ENCODE measurements at regions of chr5 and their contacts with region 1.

Region 1: DNA sequence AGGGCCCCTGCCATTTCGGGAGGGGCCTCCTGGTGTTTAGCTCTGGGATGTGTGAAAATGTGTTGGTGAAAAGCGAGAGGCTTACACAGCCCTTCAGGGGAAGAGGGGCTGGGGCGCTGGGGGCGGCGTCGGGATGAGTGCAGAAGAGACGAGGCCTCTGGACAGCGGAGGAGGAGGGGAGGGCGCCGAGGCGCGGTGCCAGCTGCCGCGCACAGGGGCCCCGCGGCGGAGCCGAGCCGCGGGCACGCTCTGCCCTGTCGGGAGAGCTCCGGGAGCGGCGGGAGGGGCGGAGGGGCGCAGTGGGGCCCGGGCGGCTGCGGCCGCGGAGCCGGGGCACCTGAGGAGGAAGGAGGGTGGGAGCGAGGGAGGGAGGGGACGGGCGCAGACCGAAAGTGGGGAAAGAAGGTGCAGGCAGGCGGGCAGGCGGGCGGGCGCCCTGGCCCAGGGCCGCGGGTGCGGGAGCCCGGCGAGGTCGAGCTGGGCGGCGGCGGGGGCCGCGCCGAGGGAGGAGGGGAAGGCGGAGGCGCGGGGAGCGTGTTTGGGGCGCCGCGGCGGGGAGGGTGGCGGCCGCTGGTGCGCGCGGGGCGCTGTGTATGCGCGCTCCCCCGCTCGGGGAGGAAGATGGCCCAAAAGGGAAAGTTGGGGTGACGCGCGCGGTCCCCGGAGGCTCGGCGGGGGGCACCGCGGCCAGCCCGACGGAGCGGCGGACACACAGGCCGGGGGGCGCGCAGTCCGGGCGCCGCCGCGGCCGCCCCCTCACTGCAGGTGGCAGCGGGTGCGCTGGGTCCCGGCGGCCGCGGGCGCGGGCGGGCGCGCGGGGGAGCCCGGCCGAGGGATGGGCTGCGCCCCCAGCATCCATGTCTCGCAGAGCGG is at the start of gene PDE8B:
- DNase-seq: no peak
- H3K4me3 ChIP-seq: no peak within 1 kb of the TSS
- H3K27ac ChIP-seq: no peak within 1 kb of the TSS
- H3K4me1 ChIP-seq: no peaks in the 10 kb centered on the region
- CTCF ChIP-seq: no peak
- total RNA-seq, gene PDE8B: 0.22 TPM in 1 of 2 replicates, not detected in the other

Region 2: DNA sequence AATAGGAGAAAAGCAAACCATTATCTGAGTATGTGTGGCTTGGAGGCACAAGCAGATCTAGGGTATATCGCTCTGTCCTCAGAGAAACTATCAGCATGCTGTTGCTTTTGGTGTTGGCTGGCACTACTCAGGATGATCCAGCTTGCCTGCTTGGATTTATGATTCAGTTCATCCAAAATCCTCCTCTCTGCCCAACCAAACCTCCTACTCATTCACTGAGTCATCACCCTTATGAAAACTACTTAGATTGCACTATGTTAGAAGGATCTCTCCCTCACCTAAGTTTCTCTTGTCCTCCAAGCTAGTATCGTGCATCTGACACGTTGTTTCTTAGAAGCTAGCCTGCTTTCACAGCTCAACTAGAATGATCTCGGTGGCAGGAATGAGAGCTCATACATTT is 109.0 kb before region 1 on chr5:
- CTCF ChIA-PET with region 1: no interaction called
- POLR2A ChIA-PET with region 1: no interaction called
- intact Hi-C with region 1: no loop called
- DNase-seq: no peak
- H3K4me3 ChIP-seq: no peak overlapping the region
- H3K27ac ChIP-seq: no peak overlapping the region
- H3K4me1 ChIP-seq: no peaks in the 10 kb centered on the region
- CTCF ChIP-seq: no peak

Region 3: GRCh38 chr5:78157001-78157400 is 946.7 kb after region 1 on chr5:
- CTCF ChIA-PET with region 1: interaction called, 10 read pairs
- POLR2A ChIA-PET with region 1: no interaction called
- intact Hi-C with region 1: no loop called
- DNase-seq: no peak
- H3K4me3 ChIP-seq: no peak overlapping the region
- H3K27ac ChIP-seq: no peak overlapping the region
- H3K4me1 ChIP-seq: no peaks in the 10 kb centered on the region
- CTCF ChIP-seq: no peak

Measured in OCI-LY7 (cell line).